Cardiac septum (tissue), 1 donor: ENCODE measurements at regions of chr2 and their contacts with region 1.

Region 1: GRCh38 chr2:173571021-173571882 is 216.6 kb downstream of the CDCA7 start:
- DNase-seq: no peak

Region 2: GRCh38 chr2:173402405-173402974 is 168.8 kb before region 1 on chr2:
- intact Hi-C with region 1: loop called (anchors 10 kb)
- DNase-seq: peak; percentile 85

Region 3: GRCh38 chr2:173472112-173472511 is 99.1 kb before region 1 on chr2:
- intact Hi-C with region 1: no loop called
- DNase-seq: no peak

Region 4: GRCh38 chr2:173483137-173483536 is 88.1 kb before region 1 on chr2:
- intact Hi-C with region 1: no loop called
- DNase-seq: no peak

Region 5: GRCh38 chr2:173537694-173538093 is 33.6 kb before region 1 on chr2:
- intact Hi-C with region 1: no loop called
- DNase-seq: no peak

Region 6: DNA sequence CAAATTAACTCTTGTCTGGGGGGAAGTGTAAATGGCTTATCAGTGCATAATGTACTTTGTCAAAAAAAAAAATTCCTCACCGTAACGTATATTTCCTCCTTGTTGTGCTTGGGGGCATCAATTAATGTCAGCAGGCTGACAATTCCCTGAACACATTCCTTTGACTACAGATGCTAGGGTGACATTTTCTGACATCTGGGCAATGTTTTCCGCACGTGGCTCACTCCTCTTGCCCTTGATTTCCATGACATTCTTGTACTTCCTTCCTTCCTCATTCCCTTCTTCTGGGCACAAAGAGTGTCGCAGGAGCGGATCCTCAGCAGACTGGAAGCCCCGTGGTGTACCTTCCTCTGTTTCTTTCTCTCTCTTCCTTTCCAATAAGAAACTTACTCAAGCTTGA is 220.2 kb after region 1 on chr2:
- intact Hi-C with region 1: no loop called
- DNase-seq: no peak

Region 7: DNA sequence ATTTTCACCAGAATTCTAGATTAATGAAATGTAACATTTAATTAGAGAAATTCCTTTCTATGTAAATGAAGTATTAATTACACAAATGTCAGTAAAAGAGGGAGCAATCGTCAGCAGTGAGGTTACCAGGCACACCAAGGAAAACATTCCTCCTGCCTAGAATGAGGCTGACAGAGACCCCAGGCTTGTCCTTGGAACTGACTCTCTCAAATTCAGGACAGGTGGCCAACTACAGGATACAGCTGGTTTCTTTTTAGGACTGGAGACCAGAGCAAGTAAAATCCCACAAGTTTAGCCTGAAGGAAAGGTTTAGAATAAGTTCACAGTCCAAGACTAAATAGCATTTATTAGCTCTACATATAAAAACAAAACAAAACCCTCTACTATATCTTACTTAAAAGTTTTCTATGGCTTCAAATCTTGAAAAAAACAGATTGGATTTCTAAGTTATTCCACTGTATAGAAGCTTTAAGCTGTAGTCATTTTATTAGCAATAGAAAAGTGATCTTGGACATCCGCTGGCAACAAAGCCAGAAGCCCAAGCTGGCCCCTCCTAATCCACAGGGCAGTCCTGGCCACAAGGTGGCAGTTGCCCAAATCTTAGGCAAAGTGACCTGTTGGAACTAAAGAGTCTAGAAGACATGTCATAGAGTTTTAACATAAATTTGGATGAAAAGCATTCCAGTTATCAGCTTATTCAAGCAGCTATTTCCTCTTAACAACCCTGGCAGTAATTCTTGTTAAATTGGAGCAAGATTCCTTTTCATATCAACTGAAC is 313.0 kb after region 1 on chr2:
- intact Hi-C with region 1: loop called (anchors 10 kb)
- DNase-seq: no peak

Region 8: GRCh38 chr2:174004905-174005605 is 433.8 kb after region 1 on chr2:
- intact Hi-C with region 1: loop called (anchors 5 kb)
- DNase-seq: no peak

Region 9: DNA sequence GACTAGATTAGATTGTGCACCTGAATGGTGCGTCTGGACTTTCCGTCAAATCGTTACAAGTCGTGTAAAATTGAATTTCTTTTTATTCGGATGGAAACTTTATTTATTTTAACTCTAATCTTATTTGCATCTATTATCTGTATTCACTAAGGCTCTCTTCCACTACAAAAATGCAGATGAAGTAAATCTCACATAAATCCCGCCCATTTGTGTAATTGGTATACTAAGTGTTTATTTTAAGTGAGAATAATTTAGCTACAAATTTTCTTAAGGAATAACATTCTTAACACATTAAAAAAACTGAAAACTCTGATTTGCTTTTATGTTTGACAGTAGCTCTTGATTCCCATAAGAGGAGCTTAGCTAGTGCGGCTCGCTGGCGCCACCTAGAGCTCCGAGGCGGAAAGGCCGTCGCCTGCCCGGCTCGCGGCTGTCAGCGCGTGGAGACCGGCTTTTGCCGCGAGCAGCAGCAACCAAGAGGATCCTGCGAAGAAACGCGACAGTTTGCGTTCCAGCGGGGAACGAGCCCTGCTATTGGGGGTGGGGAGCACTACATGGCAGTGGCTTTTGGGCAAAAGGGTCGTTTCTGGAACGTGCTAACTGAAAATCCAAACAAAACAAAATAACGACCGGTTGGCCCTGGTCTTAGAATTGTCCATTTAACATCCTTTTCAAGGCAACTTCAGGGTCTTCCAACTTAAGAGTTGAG is 770.2 kb after region 1 on chr2:
- intact Hi-C with region 1: loop called (anchors 5 kb)
- DNase-seq: peak; percentile 94